ENCODE measurements at regions of chr2 and their contacts with region 1.

Region 1: DNA sequence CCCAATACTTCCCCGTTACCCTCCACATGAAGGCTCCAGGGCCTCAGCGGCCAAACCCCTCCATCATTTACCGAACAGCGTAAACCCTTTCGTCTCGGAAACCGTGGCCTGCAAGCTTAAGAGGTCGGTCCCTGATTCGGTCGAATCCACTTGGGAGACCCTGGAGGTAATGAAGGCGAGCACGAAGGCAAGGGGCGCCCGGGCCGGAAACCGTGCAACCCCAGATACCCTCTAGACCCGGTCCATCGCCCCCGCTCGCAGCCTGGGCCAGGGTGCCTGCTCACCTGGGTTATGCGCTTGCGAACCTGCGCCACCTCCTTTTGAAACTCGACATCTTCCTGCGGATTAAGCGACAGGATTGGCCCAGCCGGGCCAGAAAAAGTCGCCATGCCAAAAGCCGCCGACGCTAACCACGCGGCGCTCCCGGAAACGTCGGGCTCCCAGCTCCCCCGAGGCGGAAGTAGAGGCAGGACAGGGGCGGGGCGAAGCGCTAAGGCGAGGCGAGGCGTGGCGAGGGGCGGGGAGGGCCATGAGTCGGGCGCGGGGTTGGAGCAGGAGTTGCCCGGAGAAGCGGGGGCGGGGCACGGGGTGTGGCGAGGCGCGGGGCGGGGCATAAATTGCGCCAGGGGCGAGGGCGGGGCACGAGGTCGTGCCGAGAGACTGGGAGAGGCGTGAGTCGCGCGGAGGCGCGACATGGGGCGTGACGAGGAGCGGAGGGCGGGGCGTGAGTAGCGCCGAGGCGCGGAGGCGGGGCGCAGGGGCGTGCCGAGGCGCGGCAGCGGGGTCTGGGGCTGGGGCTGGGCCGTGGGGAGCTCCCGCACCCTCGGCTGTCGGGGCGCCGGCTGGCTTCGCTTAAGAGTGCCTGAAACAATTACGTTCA is at the start of gene NIFK:
- DNase-seq: peak; percentile 98
- H3K4me3 ChIP-seq: peak within 1 kb of the TSS; percentile 92
- H3K27ac ChIP-seq: peak within 1 kb of the TSS; percentile 61
- H3K4me1 ChIP-seq: peaks cover 16% of the 10 kb centered on the region
- CTCF ChIP-seq: no peak
- total RNA-seq, gene NIFK: 64.1 and 78.1 TPM in 2 replicates

Region 2: DNA sequence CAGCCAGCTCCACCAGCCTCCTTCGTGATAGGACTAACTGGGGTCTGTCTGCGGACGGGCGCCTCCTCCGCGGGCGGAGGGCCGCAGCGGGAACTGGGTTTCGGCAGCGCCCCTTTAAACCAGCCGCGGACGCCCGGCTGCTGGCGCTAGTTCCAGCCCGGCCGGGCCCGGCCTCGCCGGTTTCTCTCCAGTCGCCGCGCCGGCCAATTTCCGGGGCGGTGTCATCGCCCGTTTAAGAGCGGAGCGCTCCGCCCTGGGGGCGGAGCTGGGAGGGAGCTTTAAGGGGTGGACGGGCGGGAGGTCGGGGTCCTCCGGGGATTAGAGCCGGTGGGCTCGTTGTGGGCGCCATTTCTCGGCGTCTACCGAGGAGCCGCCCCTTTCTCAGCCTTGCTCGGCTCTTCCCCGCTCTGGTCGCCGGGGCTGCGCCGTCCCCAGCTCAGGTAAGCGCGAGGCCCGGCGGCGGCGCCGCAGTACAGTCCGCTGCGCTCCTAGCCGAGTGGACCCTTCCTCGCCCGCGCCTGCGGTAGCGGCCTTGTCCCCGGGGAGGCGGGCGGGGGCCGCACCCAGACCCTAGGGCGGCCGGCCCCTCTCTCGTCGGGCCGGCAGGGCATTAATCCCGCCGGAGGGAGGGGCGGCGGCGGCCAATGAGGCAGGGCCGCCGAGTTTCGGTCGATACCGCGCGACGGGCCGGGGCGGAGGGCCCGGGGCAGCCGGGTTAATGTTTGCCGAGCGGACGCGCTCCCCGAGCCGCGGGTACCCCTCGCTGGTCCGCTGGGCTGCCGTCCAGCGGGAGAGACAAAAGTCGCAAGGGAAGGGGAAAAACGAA is 1723.7 kb before region 1 on chr2 and contains the start of gene EPB41L5:
- CTCF ChIA-PET with region 1: no interaction called
- POLR2A ChIA-PET with region 1: no interaction called
- intact Hi-C with region 1: loop called (anchors 10 kb)
- DNase-seq: peak; percentile 96
- H3K4me3 ChIP-seq: peak within 1 kb of the TSS; percentile 82
- H3K27ac ChIP-seq: peak within 1 kb of the TSS; percentile 7
- H3K4me1 ChIP-seq: peaks cover 23% of the 10 kb centered on the region
- CTCF ChIP-seq: no peak
- total RNA-seq, gene EPB41L5: 5.6 and 7.0 TPM in 2 replicates

Region 3: GRCh38 chr2:121418494-121419058 is 318.1 kb before region 1 on chr2:
- CTCF ChIA-PET with region 1: no interaction called
- POLR2A ChIA-PET with region 1: no interaction called
- intact Hi-C with region 1: no loop called
- DNase-seq: no peak
- H3K4me3 ChIP-seq: no peak overlapping the region
- H3K27ac ChIP-seq: no peak overlapping the region
- H3K4me1 ChIP-seq: no peaks in the 10 kb centered on the region
- CTCF ChIP-seq: no peak

Region 4: DNA sequence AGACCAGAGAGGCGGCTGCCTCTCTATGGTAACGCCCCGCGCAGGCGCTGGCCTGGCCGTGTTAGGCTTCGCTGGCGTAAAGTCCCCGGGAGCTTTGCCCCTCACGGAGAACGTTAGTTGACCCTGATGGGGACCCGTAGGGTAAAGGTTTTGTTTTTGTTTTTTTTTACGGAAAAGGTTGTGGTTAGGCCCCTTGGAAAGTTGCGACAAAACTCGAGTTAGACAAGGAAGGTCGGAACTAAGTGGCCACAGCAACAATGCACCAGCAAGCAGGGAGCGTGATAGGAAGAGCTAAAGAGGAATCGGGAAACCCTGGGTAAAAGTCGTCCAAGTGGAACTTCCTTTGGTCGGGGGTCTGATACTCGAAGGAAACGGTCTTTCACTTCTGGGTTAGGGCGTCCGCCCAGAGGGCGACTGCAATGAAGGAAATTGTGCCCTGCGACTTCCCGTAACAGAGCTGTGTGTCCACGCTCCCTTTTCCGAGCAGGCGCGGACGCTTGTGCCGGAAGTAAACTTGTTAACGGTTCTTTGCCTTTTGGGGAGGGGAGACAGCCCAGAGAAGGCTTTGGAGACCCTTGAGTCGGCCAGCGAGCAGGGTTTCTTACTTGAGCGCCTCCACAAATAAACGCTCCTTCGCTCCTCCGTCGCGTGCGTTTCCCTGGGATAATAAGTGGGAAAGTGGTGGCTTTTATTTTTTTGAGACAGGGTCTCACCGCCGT is 86.9 kb before region 1 on chr2:
- CTCF ChIA-PET with region 1: interaction called, 12 read pairs
- POLR2A ChIA-PET with region 1: interaction called, 6 read pairs
- intact Hi-C with region 1: no loop called
- DNase-seq: peak; percentile 97
- H3K4me3 ChIP-seq: peak overlapping the region; percentile 90
- H3K27ac ChIP-seq: peak overlapping the region; percentile 85
- H3K4me1 ChIP-seq: peaks cover 38% of the 10 kb centered on the region
- CTCF ChIP-seq: no peak

Region 5: GRCh38 chr2:121764681-121765228 is 28.1 kb after region 1 on chr2:
- CTCF ChIA-PET with region 1: no interaction called
- POLR2A ChIA-PET with region 1: no interaction called
- intact Hi-C with region 1: no loop called
- DNase-seq: no peak
- H3K4me3 ChIP-seq: no peak overlapping the region
- H3K27ac ChIP-seq: no peak overlapping the region
- H3K4me1 ChIP-seq: no peaks in the 10 kb centered on the region
- CTCF ChIP-seq: no peak

Region 6: DNA sequence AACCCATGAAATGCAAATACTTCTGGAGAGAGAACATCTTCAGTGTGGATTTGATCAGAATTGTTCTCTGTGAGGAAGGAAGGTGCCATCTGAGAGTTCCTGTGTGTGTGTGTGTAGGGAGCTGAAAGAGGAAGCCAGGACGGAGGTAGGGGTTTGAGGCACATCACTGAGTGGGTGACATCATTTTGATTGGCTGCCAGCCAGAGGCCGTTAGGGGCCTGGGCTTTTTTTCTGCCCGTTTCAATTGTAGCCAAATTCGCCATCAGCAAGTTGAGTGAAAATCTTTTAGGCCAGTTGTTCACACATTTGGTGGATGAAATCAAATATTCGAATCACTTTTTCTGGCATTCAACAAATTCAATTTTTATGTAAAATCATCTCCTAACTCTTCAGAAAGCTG is 67.6 kb after region 1 on chr2:
- CTCF ChIA-PET with region 1: no interaction called
- POLR2A ChIA-PET with region 1: interaction called, 7 read pairs
- intact Hi-C with region 1: loop called (anchors 2 kb)
- DNase-seq: peak; percentile 89
- H3K4me3 ChIP-seq: peak overlapping the region; percentile 45
- H3K27ac ChIP-seq: peak overlapping the region; percentile 78
- H3K4me1 ChIP-seq: peaks cover 35% of the 10 kb centered on the region
- CTCF ChIP-seq: no peak

Region 7: DNA sequence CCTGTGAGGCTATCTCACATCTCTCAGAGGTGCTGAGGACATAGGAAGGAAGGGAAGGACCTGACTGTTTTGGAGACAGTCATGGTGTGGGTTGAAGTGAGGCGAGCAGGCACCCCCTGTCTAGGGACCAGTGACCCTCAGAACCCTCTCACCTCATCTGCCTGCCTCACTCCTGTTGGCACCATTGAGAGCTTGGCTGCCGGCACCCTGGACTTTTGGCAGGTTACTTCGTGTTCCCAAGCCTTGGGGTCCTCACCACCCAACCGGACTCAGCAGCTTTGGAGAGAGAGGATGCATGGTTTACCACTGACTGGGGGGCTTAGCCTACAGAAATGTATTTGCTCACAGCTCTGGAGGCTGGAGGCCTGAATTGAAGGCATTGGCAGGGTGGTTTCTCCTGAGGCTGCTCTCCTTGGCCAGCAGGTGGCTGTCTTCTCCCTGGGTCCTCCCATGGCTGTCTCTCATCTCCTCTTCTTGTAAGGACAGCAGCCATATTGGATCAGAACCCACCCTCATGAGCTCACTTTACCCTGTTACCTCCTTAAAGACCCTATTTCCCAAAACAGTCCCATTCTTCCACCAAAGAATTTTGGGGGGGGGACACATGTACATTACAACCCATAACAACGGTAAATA is 160.8 kb after region 1 on chr2:
- CTCF ChIA-PET with region 1: no interaction called
- POLR2A ChIA-PET with region 1: no interaction called
- intact Hi-C with region 1: loop called (anchors 5 kb)
- DNase-seq: peak; percentile 56
- H3K4me3 ChIP-seq: no peak overlapping the region
- H3K27ac ChIP-seq: no peak overlapping the region
- H3K4me1 ChIP-seq: no peaks in the 10 kb centered on the region
- CTCF ChIP-seq: peak; percentile 82

Measured in OCI-LY7 (cell line).